SK-N-SH (cell line): ENCODE measurements at regions of chr15 and their contacts with region 1.

Region 1: GRCh38 chr15:23642413-23643044 is 5.1 kb downstream of the MAGEL2 start:
- DNase-seq: peak; percentile 81
- H3K4me3 ChIP-seq: peak overlapping the region in 1 of 2 experiments; percentile 23; a peak in 1 of 4 replicates
- H3K27ac ChIP-seq: no peak overlapping the region
- H3K4me1 ChIP-seq: no peaks in the 10 kb centered on the region
- H3K27me3 ChIP-seq: peaks cover 19% of the 10 kb centered on the region; the same call in 1 of the 2 replicates
- CTCF ChIP-seq: peak; percentile 92
- EP300 ChIP-seq: no peak
- RAD21 ChIP-seq: peak; percentile 88

Region 2: DNA sequence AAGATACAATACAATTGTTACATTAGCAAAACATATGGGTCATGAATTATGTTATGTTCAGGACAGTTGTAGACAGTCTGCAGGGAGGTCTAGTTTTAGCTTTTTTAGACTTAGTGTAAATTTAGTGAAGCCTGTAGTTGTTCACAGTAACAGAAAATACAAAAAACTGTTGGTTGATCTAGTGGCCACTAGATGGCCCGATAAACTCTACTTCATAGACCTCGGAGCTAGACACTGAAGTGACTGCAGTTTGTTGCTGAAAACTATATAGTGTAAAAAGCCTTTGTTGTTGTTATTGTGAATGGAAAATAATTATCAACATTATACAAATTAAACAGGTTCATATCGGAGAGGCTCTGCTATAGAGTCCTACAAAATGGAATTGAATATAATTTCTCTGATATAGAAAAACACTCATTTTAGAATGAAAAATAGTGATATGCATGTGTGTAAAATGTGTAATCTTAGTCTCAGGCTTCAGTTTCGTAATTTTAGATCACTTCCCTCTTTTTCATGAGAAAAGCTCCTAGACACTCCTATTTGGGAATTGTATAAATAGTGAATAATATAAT is 13.2 kb before region 1 on chr15:
- CTCF ChIA-PET with region 1: interaction called, 22 read pairs
- POLR2A ChIA-PET with region 1: no interaction called
- DNase-seq: peak; percentile 38
- H3K4me3 ChIP-seq: no peak overlapping the region
- H3K27ac ChIP-seq: no peak overlapping the region
- H3K4me1 ChIP-seq: no peaks in the 10 kb centered on the region
- H3K27me3 ChIP-seq: peaks cover 10% of the 10 kb centered on the region; the same call in 1 of the 2 replicates
- CTCF ChIP-seq: peak; percentile 67
- EP300 ChIP-seq: no peak
- RAD21 ChIP-seq: peak; percentile 22

Region 3: DNA sequence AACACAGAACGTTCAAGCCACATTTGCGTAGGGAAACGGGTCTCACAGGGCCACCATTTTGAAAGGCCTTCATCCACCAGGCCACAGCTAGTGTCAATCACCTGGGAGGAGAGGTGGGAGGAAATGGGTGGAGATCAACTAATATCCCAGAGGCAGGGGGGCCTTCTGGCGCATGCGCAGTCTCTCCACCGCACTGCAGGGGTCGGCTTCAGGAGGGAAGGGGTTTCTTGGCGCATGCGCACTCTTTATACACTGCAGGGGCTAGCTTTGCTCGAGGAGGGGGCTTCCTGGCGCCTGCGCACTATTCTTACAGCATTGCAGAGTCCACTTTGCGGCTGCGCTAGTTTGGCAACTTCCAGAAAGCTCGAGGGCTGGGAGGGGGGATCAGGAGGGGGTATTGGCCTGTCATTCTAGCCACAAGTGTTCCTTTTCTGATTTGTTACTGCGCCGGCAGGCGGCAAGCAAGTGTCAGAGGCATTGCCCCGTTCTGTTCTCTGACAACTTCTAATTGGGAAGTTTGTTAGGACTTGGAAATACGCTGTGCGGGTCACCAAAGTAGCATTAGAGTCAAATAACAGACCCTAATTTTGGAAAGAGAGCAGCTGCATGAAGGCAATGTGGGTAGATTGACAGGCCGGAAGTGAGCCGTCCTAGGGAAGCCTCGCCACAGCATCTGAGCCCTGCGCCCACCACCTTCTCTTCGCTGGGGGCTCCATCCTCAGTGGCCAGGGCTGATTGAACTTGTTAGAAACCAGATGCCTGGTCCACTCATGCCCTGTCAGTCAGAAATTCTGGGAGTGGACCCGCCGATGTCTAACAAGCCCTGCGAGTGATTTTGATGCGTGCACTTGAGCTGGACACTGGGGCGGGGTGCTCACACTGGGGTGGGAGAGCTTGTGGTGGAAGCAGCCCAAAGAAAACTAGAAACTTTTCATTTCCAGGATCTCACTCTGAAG is 218.0 kb after region 1 on chr15:
- CTCF ChIA-PET with region 1: interaction called, 12 read pairs
- POLR2A ChIA-PET with region 1: no interaction called
- DNase-seq: no peak
- H3K4me3 ChIP-seq: no peak overlapping the region
- H3K27ac ChIP-seq: no peak overlapping the region
- H3K4me1 ChIP-seq: no peaks in the 10 kb centered on the region
- H3K27me3 ChIP-seq: peaks cover 12% of the 10 kb centered on the region; the same call in 1 of the 2 replicates
- CTCF ChIP-seq: no peak
- EP300 ChIP-seq: no peak
- RAD21 ChIP-seq: no peak

Region 4: DNA sequence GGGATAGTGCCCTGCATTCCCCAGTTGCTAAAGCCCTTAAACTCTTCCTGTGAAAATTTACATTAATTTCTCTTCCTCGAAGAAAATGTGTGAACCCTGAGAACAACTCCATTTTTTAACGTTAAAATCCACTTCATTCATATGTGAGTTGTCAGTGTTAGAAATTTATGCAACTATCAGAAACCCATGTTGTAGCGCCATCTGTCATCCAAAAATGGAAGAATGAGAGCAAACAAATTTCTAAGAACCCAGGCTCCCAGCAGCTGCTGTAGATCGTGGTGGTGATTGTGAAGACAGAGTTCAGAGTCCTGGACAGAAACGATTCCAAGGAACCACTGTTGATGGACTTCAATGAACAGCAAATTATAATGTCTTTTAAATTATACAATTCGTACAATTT is 224.3 kb after region 1 on chr15:
- CTCF ChIA-PET with region 1: interaction called, 10 read pairs
- POLR2A ChIA-PET with region 1: no interaction called
- DNase-seq: peak; percentile 24
- H3K4me3 ChIP-seq: no peak overlapping the region; a peak in 1 of 4 replicates
- H3K27ac ChIP-seq: no peak overlapping the region
- H3K4me1 ChIP-seq: no peaks in the 10 kb centered on the region; a peak in 1 of 4 replicates
- H3K27me3 ChIP-seq: no peaks in the 10 kb centered on the region
- CTCF ChIP-seq: peak; percentile 57
- EP300 ChIP-seq: no peak
- RAD21 ChIP-seq: peak; percentile 47

Region 5: GRCh38 chr15:23877502-23878412 is 235.2 kb after region 1 on chr15:
- CTCF ChIA-PET with region 1: interaction called, 13 read pairs
- POLR2A ChIA-PET with region 1: no interaction called
- DNase-seq: peak; percentile 68
- H3K4me3 ChIP-seq: peak overlapping the region in 1 of 2 experiments; percentile 31; a peak in 2 of 4 replicates
- H3K27ac ChIP-seq: no peak overlapping the region
- H3K4me1 ChIP-seq: no peaks in the 10 kb centered on the region; a peak in 1 of 4 replicates
- H3K27me3 ChIP-seq: no peaks in the 10 kb centered on the region
- CTCF ChIP-seq: peak; percentile 77
- EP300 ChIP-seq: no peak
- RAD21 ChIP-seq: peak; percentile 66